Activated CD4-positive, alpha-beta T cell treated with anti-CD3 and anti-CD28 coated beads for 36 hours (primary cell): ENCODE measurements at regions of chr2 and their contacts with region 1.

Region 1: DNA sequence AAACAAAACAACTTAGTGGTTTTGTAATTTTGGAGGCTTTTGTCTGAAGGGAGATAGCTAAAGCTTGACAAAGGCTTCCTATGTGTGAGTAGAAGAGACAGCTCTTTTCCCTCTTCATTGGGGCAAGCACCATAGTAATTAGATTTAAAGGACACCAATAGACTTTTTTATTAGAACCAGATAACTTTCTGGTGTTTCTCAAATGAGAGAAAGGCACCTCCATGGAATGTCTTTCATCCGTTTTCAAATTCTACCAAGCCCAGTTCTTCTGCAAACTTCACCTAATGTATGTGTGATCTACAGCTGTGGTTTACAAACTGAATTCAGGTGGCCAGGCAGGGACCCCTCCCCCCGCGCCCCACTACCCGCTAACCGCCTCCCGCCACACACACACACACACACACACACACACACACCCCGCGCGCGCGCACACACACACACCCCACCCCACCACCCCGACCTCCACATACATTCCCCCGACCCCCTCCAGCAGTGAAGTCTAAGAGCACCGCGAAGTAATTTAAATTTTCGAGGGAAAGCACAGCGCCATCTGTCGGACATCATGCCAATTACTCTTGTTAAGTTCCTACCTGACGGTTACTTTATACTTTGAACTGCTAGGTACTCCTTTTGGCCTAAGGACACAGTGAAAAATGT is 31.6 kb upstream of the PPP1R1C start:
- DNase-seq: peak; percentile 80
- ATAC-seq: peak; percentile 60
- H3K4me3 Mint-ChIP-seq: peak overlapping the region; percentile 1
- H3K27ac Mint-ChIP-seq: no peak overlapping the region
- H3K4me1 Mint-ChIP-seq: peaks cover 19% of the 10 kb centered on the region
- H3K27me3 Mint-ChIP-seq: peaks cover 8% of the 10 kb centered on the region

Region 2: GRCh38 chr2:181077128-181077709 is 876.8 kb before region 1 on chr2:
- CTCF ChIA-PET with region 1: no interaction called
- POLR2A ChIA-PET with region 1: no interaction called
- intact Hi-C with region 1: loop called in 1 of 2 experiments (anchors 10 kb)
- DNase-seq: no peak
- ATAC-seq: peak; percentile 90
- H3K4me3 Mint-ChIP-seq: no peak overlapping the region
- H3K27ac Mint-ChIP-seq: no peak overlapping the region
- H3K4me1 Mint-ChIP-seq: peaks cover 5% of the 10 kb centered on the region
- H3K27me3 Mint-ChIP-seq: no peaks in the 10 kb centered on the region

Region 3: DNA sequence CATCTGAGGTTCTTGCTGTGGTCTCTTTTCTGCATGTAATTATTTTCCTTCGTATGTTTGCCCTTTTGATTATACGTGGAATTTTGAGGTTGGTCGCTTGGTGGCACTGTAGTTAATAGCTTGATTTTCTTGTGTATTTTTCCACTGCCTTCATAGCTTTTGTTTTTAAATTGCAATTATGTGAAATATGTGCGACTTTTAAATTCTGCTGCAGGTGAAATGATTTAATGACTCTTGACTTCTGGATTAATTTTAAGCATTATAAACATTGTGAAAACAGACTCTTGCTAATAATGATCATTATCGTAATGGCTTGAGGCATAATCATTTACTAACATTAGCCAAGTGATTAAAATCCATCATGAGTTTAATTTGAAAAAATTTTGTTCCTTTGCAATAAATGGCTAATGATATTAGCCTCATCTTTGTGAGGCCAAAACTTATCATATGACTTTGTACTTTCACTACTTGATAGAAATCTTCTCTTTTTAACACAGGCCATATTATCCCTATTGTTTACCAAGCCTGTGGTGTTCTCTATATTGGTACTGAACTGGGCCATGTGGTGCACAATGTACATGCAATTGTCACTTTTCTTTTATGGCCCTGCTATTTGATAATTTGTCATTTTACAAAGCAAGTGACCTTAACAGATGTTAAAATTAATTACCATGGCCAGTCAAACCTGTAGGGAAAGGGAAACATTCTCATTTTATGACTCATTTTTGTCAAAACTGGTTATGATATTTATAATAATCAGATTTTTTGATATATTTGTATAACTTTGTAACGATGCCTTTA is 210.9 kb before region 1 on chr2:
- CTCF ChIA-PET with region 1: interaction called, 20 read pairs
- POLR2A ChIA-PET with region 1: no interaction called
- intact Hi-C with region 1: loop called (anchors 1 to 2 kb)
- DNase-seq: peak; percentile 56
- ATAC-seq: no peak
- H3K4me3 Mint-ChIP-seq: no peak overlapping the region
- H3K27ac Mint-ChIP-seq: no peak overlapping the region
- H3K4me1 Mint-ChIP-seq: peaks cover 4% of the 10 kb centered on the region
- H3K27me3 Mint-ChIP-seq: peaks cover under 1% of the 10 kb centered on the region

Region 4: GRCh38 chr2:181937473-181937872 is 16.5 kb before region 1 on chr2:
- CTCF ChIA-PET with region 1: interaction called, 11 read pairs
- POLR2A ChIA-PET with region 1: no interaction called
- intact Hi-C with region 1: no loop called
- DNase-seq: no peak
- ATAC-seq: no peak
- H3K4me3 Mint-ChIP-seq: no peak overlapping the region
- H3K27ac Mint-ChIP-seq: no peak overlapping the region
- H3K4me1 Mint-ChIP-seq: no peaks in the 10 kb centered on the region
- H3K27me3 Mint-ChIP-seq: peaks cover 7% of the 10 kb centered on the region

Region 5: DNA sequence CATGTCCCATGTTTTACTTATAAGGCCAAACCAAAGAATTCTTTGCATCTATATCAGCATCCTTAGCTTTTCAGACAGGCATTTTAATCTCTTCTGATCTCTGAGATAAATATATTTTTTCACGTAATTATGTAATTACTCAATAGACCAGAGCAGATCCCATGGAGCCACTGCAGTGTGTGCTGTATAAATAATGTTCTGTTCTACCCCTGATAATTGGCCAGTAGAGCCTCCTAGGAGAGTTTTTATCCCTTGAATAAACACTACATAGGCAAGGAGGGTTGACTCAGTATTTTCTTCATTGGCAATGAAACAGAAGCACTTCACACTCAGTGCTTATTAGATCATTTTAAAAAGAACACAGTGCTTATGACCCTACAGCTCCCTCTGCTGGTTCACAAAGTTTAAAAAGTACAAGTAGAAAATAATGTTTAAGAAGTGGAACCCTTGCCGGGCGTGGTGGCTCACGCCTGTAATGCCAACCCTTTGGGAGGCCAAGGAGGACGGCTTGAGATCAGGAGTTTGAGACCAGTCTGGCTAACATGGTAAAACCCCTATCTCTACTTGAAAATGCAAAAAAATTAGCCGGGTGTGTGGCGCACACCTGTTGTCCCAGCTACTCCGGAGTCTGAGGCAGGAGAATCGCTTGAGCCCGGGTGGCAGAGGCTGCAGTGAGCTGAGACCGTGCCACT is 123.6 kb after region 1 on chr2:
- CTCF ChIA-PET with region 1: interaction called, 3 read pairs
- POLR2A ChIA-PET with region 1: no interaction called
- intact Hi-C with region 1: loop called in 1 of 2 experiments (anchors 5 kb)
- DNase-seq: peak; percentile 23
- ATAC-seq: peak; percentile 53
- H3K4me3 Mint-ChIP-seq: no peak overlapping the region
- H3K27ac Mint-ChIP-seq: no peak overlapping the region
- H3K4me1 Mint-ChIP-seq: no peaks in the 10 kb centered on the region
- H3K27me3 Mint-ChIP-seq: peaks cover 2% of the 10 kb centered on the region

Region 6: GRCh38 chr2:182642328-182642727 is 688.3 kb after region 1 on chr2:
- CTCF ChIA-PET with region 1: no interaction called
- POLR2A ChIA-PET with region 1: no interaction called
- intact Hi-C with region 1: loop called in 1 of 2 experiments (anchors 10 kb)
- DNase-seq: peak; percentile 44
- ATAC-seq: peak; percentile 63
- H3K4me3 Mint-ChIP-seq: no peak overlapping the region
- H3K27ac Mint-ChIP-seq: no peak overlapping the region
- H3K4me1 Mint-ChIP-seq: no peaks in the 10 kb centered on the region
- H3K27me3 Mint-ChIP-seq: no peaks in the 10 kb centered on the region